ENCODE measurements at regions of chr17 and their contacts with region 1.

Region 1: DNA sequence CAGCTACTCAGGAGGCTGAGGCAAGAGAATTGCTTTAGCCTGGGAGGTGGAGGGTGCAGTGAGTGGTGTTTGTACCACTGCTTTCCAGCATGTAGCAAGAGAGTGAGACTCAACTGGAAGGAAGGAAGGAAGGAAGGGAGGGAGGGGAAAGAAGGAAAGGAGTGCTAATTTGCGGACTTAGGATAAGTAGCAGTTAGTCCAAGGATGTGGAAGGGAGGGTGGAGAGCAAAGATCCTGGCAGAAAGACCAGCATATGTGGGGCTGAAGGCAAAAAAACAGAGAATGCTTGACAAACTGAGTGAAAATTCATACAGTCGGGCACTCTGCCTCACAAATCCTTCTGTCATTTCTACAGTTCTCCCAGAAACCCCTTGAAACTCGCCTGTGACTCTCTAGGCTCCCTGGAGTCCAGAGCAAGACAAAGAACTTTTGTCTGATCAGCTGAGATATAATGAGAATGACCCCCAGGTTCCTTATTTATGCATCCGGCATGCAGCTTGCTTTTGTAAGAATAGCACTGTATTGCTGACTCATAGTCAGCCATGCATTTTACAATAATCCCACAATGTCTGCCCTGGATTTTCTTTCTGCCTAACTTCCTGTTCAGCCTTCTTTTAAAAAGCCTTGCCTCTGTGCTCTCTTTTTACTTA is 31.5 kb downstream of the CDK5RAP3 start:
- DNase-seq: peak; percentile 75
- ATAC-seq: peak; percentile 85
- H3K4me3 ChIP-seq: no peak overlapping the region
- H3K27ac ChIP-seq: peak overlapping the region; percentile 85
- H3K4me1 ChIP-seq: peaks cover 49% of the 10 kb centered on the region
- H3K27me3 ChIP-seq: no peaks in the 10 kb centered on the region
- CTCF ChIP-seq: no peak
- EP300 ChIP-seq: peak; percentile 47 to 77; a peak in 2 of 4 replicates
- POLR2A ChIP-seq: no peak
- RAD21 ChIP-seq: no peak

Region 2: DNA sequence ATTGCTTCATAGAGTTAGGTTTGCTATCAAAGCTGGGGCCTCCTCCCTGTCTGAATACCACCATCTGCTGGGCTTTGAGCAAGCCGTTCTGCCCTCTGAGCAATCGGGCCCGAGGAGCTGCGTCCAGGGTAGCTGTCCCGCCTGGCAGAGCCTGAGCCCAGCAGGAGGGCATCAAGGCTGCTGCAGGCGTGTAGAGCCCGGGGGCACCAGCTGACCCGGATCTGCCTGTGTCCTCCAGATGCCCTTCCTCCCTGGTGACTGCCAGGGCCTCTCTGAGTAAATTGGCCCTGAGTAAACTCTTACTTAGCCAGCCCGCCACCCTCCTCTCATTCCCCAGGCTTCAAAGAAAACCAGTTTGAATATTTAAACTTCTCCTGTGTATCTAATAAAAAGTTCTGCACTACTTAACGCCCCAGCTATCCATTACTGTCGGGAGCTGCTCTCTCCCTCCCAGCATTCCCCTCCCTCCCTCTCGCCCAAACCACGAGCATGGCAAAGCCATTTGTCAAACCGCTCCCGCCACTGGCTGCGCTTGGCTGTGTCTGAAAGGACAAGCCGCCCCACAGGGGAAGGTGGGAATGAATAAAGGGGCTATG is 15.1 kb before region 1 on chr17:
- CTCF ChIA-PET with region 1: interaction called, 18 read pairs
- POLR2A ChIA-PET with region 1: interaction called, 3 read pairs
- RAD21 ChIA-PET with region 1: interaction called, 3 read pairs
- SMC1A ChIA-PET with region 1: interaction called, 4 read pairs
- in situ Hi-C with region 1: no loop called
- intact Hi-C with region 1: no loop called
- DNase-seq: no peak
- ATAC-seq: no peak
- H3K4me3 ChIP-seq: no peak overlapping the region
- H3K27ac ChIP-seq: no peak overlapping the region
- H3K4me1 ChIP-seq: peaks cover 13% of the 10 kb centered on the region
- H3K27me3 ChIP-seq: no peaks in the 10 kb centered on the region
- CTCF ChIP-seq: no peak
- EP300 ChIP-seq: no peak
- POLR2A ChIP-seq: no peak
- RAD21 ChIP-seq: no peak

Measured in GM12878 (cell line).